Activated CD4-positive, alpha-beta T cell treated with anti-CD3 and anti-CD28 coated beads, Interleukin-2, amount 10 ng/mL, durations not matched to agents 24 days and 14 days (primary cell): ENCODE measurements at regions of chr10 and their contacts with region 1.

Region 1: GRCh38 chr10:30783939-30784500 is 154.5 kb upstream of the LYZL2 start:
- DNase-seq: peak; percentile 94
- H3K4me3 Mint-ChIP-seq: peak overlapping the region; percentile 84
- H3K27ac Mint-ChIP-seq: peak overlapping the region; percentile 86
- H3K4me1 Mint-ChIP-seq: peaks cover 30% of the 10 kb centered on the region
- H3K27me3 Mint-ChIP-seq: peaks cover 2% of the 10 kb centered on the region

Region 2: DNA sequence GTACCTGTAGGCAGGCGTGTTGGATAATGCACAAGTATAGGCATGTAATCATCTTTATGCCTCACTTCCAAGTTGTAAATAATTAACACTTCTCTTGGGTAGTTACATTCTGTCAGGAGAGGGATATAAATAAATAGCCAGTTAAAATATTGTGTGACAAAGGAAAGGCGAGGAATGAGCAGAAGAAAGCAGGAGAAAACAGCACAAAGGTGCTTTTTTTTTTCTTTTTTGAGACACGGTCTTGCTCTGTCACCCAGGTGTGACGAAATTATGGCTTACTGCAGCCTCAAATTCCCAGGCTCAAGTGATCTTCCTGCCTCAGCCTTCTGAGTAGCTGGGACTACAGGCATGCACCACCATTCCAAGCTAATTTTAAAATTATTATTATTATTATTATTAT is 55.2 kb before region 1 on chr10:
- intact Hi-C with region 1: loop called (anchors 2 kb)
- DNase-seq: no peak
- H3K4me3 Mint-ChIP-seq: no peak overlapping the region
- H3K27ac Mint-ChIP-seq: no peak overlapping the region
- H3K4me1 Mint-ChIP-seq: peaks cover 8% of the 10 kb centered on the region
- H3K27me3 Mint-ChIP-seq: no peaks in the 10 kb centered on the region

Region 3: GRCh38 chr10:30935078-30935477 is 151.1 kb after region 1 on chr10:
- intact Hi-C with region 1: no loop called
- DNase-seq: no peak
- H3K4me3 Mint-ChIP-seq: no peak overlapping the region
- H3K27ac Mint-ChIP-seq: no peak overlapping the region
- H3K4me1 Mint-ChIP-seq: peaks cover 7% of the 10 kb centered on the region
- H3K27me3 Mint-ChIP-seq: no peaks in the 10 kb centered on the region

Region 4: DNA sequence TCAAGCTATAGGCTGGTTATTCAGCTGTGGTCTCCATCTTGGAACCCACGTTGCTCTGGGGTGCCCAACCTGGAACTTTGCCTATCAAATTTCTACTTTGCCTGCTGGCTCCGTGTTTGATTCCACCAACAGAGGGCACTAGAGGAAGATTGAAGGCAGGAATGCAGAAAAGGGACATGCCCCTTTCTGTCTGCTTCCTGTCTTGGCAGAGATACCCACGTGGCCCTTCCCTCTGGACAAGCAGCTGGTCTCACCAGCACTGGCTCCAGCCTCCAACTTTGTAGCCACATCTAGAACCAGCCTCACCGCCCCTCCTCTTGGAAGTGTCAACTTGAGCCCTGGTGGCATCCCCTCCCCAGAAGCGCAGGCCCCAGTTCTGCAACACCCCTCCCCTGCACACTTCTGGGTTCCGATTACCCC is 299.8 kb after region 1 on chr10:
- intact Hi-C with region 1: loop called (anchors 2 kb)
- DNase-seq: peak; percentile 91
- H3K4me3 Mint-ChIP-seq: no peak overlapping the region
- H3K27ac Mint-ChIP-seq: peak overlapping the region; percentile 66
- H3K4me1 Mint-ChIP-seq: peaks cover 11% of the 10 kb centered on the region
- H3K27me3 Mint-ChIP-seq: no peaks in the 10 kb centered on the region

Region 5: GRCh38 chr10:31490858-31491504 is 707.0 kb after region 1 on chr10:
- intact Hi-C with region 1: loop called (anchors 2 kb)
- DNase-seq: peak; percentile 78
- H3K4me3 Mint-ChIP-seq: no peak overlapping the region
- H3K27ac Mint-ChIP-seq: peak overlapping the region; percentile 65
- H3K4me1 Mint-ChIP-seq: peaks cover 5% of the 10 kb centered on the region
- H3K27me3 Mint-ChIP-seq: no peaks in the 10 kb centered on the region

Region 6: DNA sequence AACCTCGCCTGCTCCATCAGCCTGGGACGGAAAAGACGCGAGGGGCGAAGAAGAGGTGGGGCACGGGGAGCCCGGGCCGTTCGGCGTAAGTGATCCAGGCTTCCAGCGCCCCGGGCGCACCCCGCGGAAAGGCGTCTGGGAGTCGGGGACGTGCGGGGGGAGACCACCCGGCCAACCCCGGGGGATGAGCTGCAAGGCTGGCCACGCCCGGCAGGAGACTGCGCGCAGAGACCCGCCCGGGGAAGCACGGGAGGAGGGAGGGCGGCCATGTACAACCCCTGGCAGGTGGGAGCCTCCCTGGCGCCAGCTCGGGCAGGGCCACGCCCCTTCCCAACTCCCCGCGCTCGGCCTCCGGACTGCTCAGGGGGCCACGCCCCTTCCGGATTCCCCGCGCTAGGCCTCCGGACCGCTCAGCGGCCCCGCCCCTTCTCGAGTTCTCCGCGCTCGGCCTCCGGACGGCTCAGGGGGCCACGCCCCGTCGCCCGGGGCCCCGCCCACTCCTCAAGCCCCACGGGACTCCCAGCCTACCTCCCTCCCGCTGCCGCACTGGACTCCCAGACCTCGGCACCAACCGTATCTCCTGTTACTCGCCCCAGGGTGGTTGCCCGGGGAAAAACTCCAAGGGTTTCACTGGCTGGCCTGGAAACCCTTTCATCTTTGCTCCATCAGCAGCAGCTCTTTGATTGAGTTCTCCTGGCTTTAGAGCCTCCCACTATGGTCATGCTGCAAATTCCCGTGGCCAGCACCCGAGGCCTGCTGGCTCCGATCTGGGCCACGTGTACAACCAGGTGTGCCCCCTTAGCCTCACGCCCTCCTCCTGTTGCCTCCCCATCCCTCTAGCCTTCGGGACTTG is 819.4 kb after region 1 on chr10:
- intact Hi-C with region 1: loop called (anchors 10 kb)
- DNase-seq: peak; percentile 95
- H3K4me3 Mint-ChIP-seq: peak overlapping the region; percentile 88
- H3K27ac Mint-ChIP-seq: no peak overlapping the region
- H3K4me1 Mint-ChIP-seq: peaks cover 26% of the 10 kb centered on the region
- H3K27me3 Mint-ChIP-seq: peaks cover 3% of the 10 kb centered on the region

Region 7: DNA sequence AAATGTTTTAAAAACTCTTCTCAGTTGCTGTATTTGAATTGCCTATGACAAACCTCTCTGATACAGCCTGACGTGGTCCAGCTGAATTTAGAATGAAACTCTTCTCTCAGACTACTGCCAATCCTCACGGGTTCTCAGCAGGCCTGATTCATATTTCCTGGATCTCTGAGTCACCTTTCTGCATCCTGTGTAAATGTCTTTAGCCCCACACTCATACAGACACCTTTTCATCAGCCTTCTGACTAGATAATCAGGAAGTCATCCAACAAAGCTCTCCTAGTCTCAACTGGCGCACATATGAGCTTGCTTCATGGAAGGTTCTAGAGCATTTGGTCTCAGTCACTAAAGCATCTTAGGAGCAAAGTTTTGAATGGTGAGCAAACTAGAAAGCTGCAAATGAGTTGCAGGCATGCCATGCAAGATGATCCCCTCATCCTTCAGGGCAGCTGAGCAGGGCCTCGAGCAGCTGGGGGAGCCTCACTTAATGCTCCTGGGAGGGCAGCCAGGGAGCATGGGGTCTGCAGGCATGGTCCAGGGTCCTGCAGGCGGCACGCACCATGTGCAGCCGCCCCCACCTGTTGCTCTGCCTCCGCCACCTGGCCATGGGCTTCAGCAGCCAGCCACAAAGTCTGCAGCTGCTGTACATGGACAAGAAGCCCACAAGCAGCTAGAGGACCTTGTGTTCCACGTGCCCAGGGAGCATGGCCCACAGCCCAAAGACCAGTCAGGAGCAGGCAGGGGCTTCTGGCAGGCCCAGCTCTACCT is 961.8 kb after region 1 on chr10:
- intact Hi-C with region 1: no loop called
- DNase-seq: peak; percentile 84
- H3K4me3 Mint-ChIP-seq: no peak overlapping the region
- H3K27ac Mint-ChIP-seq: peak overlapping the region; percentile 79
- H3K4me1 Mint-ChIP-seq: peaks cover 27% of the 10 kb centered on the region
- H3K27me3 Mint-ChIP-seq: no peaks in the 10 kb centered on the region

Region 8: GRCh38 chr10:31770307-31770902 is 986.4 kb after region 1 on chr10:
- intact Hi-C with region 1: loop called (anchors 1 kb)
- DNase-seq: peak; percentile 85
- H3K4me3 Mint-ChIP-seq: no peak overlapping the region
- H3K27ac Mint-ChIP-seq: no peak overlapping the region
- H3K4me1 Mint-ChIP-seq: no peaks in the 10 kb centered on the region
- H3K27me3 Mint-ChIP-seq: no peaks in the 10 kb centered on the region

Region 9: DNA sequence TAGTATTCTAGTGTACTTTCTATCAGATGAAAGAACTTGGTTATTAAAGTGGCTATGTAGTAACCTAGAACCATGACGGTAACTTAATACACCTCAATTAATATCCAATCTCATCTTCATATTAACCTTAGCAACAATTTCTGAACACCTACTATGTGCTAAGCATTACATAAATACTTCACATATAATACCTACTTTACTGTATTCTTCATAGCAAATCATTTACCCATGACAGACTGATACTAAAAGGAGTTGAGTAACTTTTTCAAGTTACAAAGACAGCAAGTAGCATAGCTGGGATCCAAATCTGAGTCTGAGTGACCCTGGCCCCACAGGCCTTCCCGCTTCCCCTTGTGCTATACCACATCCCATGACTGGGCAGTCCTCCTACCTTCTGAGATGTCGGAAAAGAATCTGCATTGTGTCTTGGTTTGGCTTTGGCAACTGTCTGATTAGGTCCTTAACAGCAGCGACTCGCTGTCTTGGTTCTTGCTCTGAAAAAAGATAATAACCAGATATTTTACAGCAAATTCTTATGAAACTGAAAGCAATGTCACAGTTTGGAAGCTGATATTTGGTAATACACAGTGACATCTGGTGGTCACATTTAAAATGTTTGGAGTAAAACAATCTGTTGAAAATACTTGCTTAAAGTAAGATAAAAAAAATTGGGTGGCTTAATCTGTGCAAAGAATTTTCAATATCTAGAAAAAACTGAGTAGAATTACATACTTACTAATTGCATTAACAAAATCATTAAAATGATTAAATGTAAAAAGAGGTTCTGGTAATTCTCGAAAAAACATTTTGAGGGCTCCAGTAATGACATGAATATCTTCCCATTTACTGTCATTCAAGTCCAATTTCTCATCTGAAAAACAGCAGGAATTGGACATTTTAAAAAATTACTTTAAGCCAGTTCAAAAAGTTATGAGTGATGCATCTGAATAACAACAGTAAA is 1024.5 kb after region 1 on chr10:
- intact Hi-C with region 1: loop called (anchors 1 kb)
- DNase-seq: peak; percentile 71
- H3K4me3 Mint-ChIP-seq: peak overlapping the region; percentile 72
- H3K27ac Mint-ChIP-seq: peak overlapping the region; percentile 81
- H3K4me1 Mint-ChIP-seq: peaks cover 6% of the 10 kb centered on the region
- H3K27me3 Mint-ChIP-seq: no peaks in the 10 kb centered on the region